Aorta (tissue), 5 donors: ENCODE measurements at regions of chr12 and their contacts with region 1.

Region 1: DNA sequence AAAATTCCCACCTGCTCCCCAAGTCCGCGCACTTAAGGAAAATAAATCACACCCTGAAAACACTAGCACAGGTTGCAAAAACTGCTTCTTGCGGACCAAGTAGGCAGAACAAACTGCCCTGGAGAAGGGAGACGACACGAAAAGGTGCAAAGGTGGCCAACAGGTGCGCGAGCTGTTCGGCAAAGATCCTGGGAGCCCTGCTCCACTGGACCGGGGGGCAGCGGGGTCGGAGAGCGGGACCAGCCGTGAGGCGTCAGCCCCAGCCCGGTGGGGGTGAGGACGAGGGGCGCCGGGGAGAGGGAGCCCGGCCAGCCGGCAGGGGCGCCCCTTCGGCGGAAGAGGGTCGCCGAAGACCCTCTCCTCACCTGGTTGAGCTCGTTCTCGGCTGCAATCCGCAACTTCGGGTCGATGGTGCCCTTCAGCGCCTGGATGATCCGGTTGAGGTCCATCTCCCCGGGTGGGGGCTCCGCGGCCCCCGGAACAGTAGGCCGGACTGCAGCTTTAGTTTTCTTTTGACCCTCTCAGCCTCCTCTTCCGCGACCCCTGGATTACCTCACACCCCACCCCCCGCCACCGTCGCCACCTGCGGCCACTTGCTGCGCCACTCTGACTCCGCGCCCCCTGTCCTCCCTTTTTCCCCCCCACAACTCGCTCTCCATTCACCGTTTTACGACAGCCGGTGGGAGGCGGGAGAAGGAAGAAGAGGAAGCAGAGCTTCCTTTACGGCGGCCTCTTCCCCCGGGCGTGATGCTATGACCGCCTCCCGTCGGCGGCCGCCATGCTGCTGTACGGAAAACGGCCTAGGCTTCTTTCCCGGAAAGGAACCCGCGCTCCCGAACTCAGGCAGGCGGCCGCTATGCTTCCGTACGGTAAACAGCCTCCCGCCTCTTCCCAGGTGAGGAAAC is at the start of gene IPO8:
- DNase-seq: peak; percentile 96 to 97
- ATAC-seq: peak; percentile 98
- H3K4me3 ChIP-seq: peak within 1 kb of the TSS; percentile 77 to 87
- H3K27ac ChIP-seq: peak within 1 kb of the TSS in 1 of 2 donors; percentile 39
- H3K4me1 ChIP-seq: no peaks in the 10 kb centered on the region
- H3K27me3 ChIP-seq: no peaks in the 10 kb centered on the region
- total RNA-seq, gene IPO8: 48.9 to 49.3 TPM

Region 2: DNA sequence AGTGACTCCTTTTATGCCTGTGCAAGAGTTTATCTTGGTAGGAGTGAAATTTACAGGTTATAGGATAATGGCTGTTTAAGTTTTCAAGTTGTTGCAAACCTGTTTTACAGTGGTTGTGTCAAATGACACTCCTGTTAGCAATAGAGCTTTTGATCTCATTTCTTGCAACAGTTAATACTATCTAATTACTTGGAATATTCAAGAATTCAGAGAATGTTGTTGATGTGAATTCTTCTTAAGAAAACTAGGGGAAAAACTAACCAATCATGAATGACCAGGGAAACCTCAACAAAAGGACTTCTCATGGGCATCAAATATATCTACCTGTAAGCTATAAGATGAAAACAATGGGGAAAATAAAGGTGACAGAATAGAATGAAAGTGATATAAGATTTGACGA is 84.7 kb before region 1 on chr12:
- intact Hi-C with region 1: no loop called
- DNase-seq: no peak
- ATAC-seq: no peak
- H3K4me3 ChIP-seq: no peak overlapping the region
- H3K27ac ChIP-seq: no peak overlapping the region
- H3K4me1 ChIP-seq: no peaks in the 10 kb centered on the region
- H3K27me3 ChIP-seq: no peaks in the 10 kb centered on the region

Region 3: GRCh38 chr12:30754709-30755394 is 59.4 kb after region 1 on chr12 and contains the start of gene CAPRIN2:
- intact Hi-C with region 1: loop called (anchors 2 to 5 kb)
- DNase-seq: peak; percentile 98 to 99
- ATAC-seq: peak; percentile 99
- H3K4me3 ChIP-seq: peak within 1 kb of the TSS; percentile 63 to 81
- H3K27ac ChIP-seq: peak within 1 kb of the TSS; percentile 19 to 65
- H3K4me1 ChIP-seq: peaks cover 4 to 5% of the 10 kb centered on the region in 2 donors
- H3K27me3 ChIP-seq: no peaks in the 10 kb centered on the region
- total RNA-seq, gene CAPRIN2: 26.5 to 41.2 TPM

Region 4: GRCh38 chr12:30795410-30796312 is 100.2 kb after region 1 on chr12:
- intact Hi-C with region 1: loop called (anchors 10 kb)
- DNase-seq: peak; percentile 86 to 92
- ATAC-seq: peak; percentile 84
- H3K4me3 ChIP-seq: peak overlapping the region; percentile 54 to 58
- H3K27ac ChIP-seq: peak overlapping the region in 1 of 2 donors; percentile 38
- H3K4me1 ChIP-seq: no peaks in the 10 kb centered on the region
- H3K27me3 ChIP-seq: no peaks in the 10 kb centered on the region

Region 5: DNA sequence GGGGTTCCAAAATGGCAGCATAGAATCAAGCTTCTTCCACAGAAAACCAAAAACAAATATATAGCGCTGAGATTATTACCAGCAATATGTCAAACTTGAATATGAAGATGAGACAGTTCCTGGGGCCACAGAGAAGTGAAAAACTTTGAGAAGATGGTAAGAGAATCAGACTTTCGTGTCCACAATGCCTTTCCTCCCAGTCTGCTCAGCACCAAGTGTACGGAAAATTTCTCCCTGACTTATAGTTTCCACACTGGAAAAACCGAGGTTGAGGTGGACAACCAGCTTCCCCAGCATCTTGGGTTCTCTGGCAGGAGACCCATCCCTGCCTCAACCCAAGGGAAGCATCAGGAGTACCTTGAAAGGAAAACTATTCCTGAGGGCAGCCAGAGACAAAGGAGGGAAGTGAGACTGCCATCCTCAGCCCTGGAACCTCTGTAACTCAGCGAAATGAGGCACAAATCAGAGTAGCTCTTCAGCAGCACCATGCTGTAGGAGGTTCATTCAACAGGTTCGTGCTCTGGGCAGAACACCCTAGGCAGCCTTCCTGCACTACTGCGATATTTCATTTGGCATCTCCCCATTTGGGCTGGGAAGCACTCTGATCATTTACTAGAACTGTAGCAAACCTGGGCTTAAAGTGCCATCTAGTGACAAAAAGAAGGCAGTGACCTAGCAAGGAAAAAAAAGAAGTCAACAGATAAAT is 111.7 kb after region 1 on chr12:
- intact Hi-C with region 1: loop called in 1 of 2 experiments (anchors 10 kb)
- DNase-seq: no peak
- ATAC-seq: peak; percentile 86
- H3K4me3 ChIP-seq: no peak overlapping the region
- H3K27ac ChIP-seq: no peak overlapping the region
- H3K4me1 ChIP-seq: peaks cover 0 to 2% of the 10 kb centered on the region in 2 donors
- H3K27me3 ChIP-seq: no peaks in the 10 kb centered on the region